Lower leg skin (tissue), 4 donors: ENCODE measurements at regions of chr4 and their contacts with region 1.

Region 1: GRCh38 chr4:17195461-17196275 is 297.2 kb upstream of the LDB2 start:
- DNase-seq: no peak
- H3K4me3 ChIP-seq: no peak overlapping the region
- CTCF ChIP-seq: no peak
- POLR2A ChIP-seq: no peak

Region 2: GRCh38 chr4:16449406-16449805 is 746.3 kb before region 1 on chr4:
- intact Hi-C with region 1: loop called (anchors 5 kb)
- DNase-seq: no peak
- H3K4me3 ChIP-seq: no peak overlapping the region
- CTCF ChIP-seq: no peak
- POLR2A ChIP-seq: no peak